GM18951 (cell line): ENCODE measurements at regions of chr16 and their contacts with region 1.

Region 1: DNA sequence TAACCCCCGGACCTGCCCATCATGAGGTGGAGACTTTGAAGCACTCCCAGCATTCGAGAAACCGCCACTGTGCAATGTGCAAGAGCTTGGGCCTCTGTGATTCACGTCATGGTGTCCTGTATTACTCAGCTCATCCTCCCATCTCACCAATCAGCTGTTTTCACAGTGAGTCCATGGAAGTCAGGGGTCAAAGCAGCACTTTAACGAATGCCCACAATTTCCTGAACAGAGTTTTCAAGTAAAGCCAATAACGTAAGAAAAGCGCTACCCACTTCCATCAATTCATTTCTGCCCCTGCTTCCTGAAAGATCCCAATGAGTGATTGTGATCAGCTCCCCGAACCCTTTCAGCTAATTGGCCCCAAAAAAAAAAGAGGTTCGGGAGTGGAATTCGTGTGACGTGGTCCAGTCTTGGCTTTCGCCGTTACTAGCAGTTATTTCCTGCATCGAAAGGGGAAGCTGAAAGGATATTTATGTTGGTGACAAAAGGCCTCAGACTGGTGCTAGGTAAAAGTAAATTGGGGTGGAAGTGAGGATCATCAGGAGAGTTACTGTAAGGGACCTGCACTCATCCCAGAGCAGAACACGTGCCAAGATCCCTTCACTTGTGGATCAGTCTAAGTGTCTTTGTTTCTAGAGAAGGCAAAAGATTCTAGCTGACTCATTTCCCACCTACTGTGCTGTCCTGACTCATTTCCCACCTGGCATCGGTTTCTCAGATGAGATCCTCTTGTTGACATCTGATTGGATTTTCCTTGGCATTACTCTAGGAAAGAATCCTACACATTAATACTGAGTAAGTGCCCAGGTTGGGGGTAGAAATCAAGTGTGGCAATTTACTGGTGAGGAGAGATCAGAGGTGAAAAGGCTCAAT is 136.7 kb upstream of the NUDT7 start:
- POLR2A ChIP-seq: no peak

Region 2: DNA sequence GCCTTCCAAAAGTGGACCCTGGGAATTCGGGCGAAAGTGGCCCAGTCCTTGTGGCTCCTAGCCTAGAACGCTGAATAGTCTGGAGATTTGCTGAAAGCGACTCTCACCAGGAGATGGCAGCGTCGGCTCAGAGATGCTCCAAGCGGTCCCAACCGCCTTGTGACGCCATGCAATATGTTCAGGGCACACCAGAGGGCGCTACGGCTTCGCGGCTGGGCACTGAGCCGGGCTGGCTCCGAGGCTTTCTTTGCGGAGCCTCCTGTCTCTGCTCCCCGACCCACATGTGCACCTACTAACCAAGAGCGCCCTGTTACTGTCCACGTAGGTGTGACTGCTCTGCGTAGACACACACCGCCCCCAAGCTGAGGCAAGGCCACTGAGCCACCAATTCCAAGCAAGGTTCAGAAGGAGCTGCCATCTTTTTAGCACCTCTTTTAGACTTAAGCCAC is 349.5 kb before region 1 on chr16:
- in situ Hi-C with region 1: loop called (anchors 5 kb)
- POLR2A ChIP-seq: no peak

Region 3: DNA sequence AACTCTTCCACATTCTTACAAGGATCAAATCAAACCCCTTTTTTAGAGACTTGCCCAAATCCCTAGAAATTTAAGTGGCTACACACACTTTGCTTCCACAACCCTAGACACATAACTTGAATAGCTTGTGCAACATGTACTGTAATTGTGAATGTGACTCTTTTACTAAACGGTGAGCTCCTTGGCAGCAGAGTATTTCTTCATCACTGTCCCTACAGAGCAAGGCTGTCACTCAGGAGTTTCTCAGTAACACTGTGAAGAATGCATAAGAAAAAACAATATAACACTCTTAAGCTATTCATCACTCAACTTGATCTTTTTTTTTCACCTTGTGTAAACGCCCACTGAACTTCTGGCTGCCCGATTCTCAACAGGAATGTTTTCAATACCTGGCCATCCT is 97.0 kb before region 1 on chr16:
- in situ Hi-C with region 1: no loop called
- POLR2A ChIP-seq: no peak

Region 4: GRCh38 chr16:77696149-77696548 is 110.5 kb after region 1 on chr16:
- in situ Hi-C with region 1: no loop called
- POLR2A ChIP-seq: no peak

Region 5: GRCh38 chr16:78770353-78771091 is 1184.9 kb after region 1 on chr16:
- in situ Hi-C with region 1: no loop called
- POLR2A ChIP-seq: no peak

Region 6: DNA sequence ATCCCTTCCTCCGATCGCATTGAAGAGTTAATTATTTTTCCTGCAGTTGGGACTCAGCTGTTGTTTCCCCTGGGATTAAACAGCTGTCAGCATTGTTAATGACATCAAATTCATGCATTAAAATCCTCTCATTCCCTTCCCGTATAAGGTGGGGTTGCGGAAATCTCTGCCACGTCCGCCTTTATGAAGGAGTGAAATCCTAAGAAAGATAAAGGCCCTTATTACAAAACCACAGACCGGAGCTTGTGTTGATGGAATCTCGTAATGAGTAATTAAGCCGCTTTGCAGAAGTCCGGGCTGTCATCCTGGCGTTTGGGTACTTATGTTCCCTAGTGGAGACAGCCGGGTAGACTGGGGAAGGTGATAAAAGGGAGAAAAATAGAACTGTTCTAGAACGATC is 1387.4 kb after region 1 on chr16:
- in situ Hi-C with region 1: no loop called
- POLR2A ChIP-seq: no peak